Heart left ventricle (tissue), 16 donors: ENCODE measurements at regions of chr11 and their contacts with region 1.

Region 1: GRCh38 chr11:2885676-2886081 is at the start of gene CDKN1C:
- DNase-seq: peak; percentile 83 to 94 (median 91)
- ATAC-seq: peak; percentile 59 to 82 (median 76)
- H3K4me3 ChIP-seq: peak within 1 kb of the TSS; percentile 67 to 90 (median 85)
- H3K27ac ChIP-seq: peak within 1 kb of the TSS; percentile 71 to 94 (median 88)
- H3K4me1 ChIP-seq: peaks cover 0 to 43% (median 25%) of the 10 kb centered on the region in 12 donors
- H3K27me3 ChIP-seq: peaks cover 0 to 14% (median 0%) of the 10 kb centered on the region in 9 donors
- CTCF ChIP-seq: no peak
- POLR2A ChIP-seq: peak in 1 of 2 donors; percentile 95
- total RNA-seq, gene CDKN1C: 18.8 to 39.1 (median 33.4) TPM

Region 2: DNA sequence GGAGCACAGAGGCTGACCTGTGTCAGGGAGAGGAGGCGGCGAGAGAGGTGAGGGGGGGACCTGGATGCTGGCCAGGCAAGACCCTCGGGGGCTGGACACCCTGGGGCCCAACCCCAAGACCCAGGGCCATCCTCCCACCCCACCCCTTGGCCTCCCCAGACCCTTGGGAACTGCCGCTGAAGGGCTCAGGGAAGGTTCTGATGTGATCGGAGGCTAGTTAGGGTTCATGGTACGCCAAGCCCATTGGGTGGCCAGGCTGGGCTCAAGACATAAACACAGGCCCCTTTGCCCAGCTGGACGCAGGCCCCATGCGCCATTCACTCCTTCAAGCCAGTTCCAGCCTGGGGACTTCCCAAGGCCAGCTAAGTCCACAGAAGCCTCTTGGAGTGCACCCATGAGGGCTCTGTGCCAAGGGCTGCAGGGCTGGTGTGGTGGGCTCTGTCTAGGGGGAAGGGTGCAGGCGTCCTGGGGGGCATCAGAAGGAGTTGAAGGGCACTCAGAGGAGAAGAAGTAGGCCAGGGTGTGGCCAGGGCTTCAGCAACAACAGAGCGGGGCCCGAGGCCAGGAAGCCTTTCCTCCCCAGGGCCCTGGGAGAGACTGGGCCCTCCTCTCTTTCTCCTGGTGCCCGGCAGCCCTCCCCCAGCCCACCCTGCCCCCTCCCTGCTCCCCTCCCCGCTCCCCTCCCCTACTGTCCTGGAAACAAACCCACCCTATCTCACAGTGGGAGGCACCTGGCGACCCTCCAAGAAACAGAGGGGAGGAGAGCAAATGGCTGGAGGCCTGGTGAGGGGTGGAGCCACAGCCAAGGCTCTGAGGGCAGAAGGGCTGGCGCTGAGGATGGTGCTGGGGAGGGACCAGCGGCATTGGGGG is 570.9 kb before region 1 on chr11:
- intact Hi-C with region 1: loop called in 3 of 10 experiments (anchors 5 to 10 kb)
- DNase-seq: peak; percentile 92 to 97 (median 94)
- ATAC-seq: peak; percentile 86 to 91 (median 89)
- H3K4me3 ChIP-seq: peak overlapping the region in 9 of 12 donors; percentile 14 to 34 (median 26)
- H3K27ac ChIP-seq: peak overlapping the region; percentile 69 to 90 (median 86)
- H3K4me1 ChIP-seq: peaks cover 0 to 41% (median 26%) of the 10 kb centered on the region in 12 donors
- H3K27me3 ChIP-seq: no peaks in the 10 kb centered on the region
- CTCF ChIP-seq: no peak
- POLR2A ChIP-seq: no peak

Region 3: GRCh38 chr11:2444821-2445745 is 440.6 kb before region 1 on chr11 and contains the start of gene KCNQ1:
- intact Hi-C with region 1: loop called in 1 of 10 experiments (anchors 5 kb)
- DNase-seq: peak; percentile 55 to 84 (median 69)
- ATAC-seq: peak in 3 of 4 donors; percentile 60 to 85 (median 79)
- H3K4me3 ChIP-seq: peak within 1 kb of the TSS; percentile 11 to 68 (median 53)
- H3K27ac ChIP-seq: peak within 1 kb of the TSS in 9 of 12 donors; percentile 15 to 69 (median 49)
- H3K4me1 ChIP-seq: peaks cover 5 to 49% (median 33%) of the 10 kb centered on the region in 12 donors
- H3K27me3 ChIP-seq: peaks cover 0 to 9% (median 0%) of the 10 kb centered on the region in 9 donors
- CTCF ChIP-seq: peak in 1 of 12 donors; percentile 8
- POLR2A ChIP-seq: peak; percentile 43 to 59
- total RNA-seq, gene KCNQ1: 18.6 to 42.4 (median 38.4) TPM

Region 4: DNA sequence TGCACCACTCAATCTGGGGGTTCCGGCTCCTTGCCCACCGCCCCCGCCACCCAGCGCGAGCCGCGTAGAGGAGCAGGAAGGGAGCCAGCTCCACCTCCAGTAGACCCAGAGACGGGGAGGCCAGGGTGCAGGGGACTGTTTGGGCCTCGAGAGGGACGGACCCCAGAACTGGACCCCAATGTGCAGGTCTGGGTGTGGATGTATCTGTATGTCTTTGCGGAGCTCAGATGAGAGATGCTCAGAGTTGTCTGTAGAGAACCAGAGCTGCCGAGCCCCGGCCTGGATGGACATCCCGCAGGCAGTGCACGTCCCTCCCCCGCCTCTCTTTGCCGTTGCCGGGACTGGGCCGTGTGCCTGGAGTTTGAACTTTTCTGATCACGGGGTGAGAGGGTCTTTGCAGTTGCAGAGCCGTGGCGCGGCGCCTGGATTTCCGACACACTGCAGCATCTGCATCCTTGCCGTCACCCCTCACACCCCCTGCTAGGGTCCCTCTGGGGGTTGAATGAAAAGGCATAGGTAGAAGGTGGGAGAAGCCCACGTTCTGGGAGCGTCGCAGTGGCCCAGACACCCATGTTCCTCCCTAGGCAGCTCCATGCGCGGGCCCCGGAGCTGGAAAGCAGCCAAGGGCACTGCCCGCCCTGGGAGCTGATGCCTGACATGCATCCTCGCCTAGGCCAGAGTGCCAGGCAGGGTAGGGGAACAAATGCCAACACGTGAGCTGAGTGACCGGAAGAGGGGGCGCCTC is 335.6 kb before region 1 on chr11:
- intact Hi-C with region 1: loop called in 1 of 10 experiments (anchors 5 kb)
- DNase-seq: peak in 4 of 5 donors; percentile 52 to 77 (median 65)
- ATAC-seq: peak; percentile 38 to 84 (median 82)
- H3K4me3 ChIP-seq: no peak overlapping the region
- H3K27ac ChIP-seq: no peak overlapping the region
- H3K4me1 ChIP-seq: peaks cover 0 to 12% (median 0%) of the 10 kb centered on the region in 12 donors
- H3K27me3 ChIP-seq: no peaks in the 10 kb centered on the region
- CTCF ChIP-seq: no peak
- POLR2A ChIP-seq: no peak

Region 5: DNA sequence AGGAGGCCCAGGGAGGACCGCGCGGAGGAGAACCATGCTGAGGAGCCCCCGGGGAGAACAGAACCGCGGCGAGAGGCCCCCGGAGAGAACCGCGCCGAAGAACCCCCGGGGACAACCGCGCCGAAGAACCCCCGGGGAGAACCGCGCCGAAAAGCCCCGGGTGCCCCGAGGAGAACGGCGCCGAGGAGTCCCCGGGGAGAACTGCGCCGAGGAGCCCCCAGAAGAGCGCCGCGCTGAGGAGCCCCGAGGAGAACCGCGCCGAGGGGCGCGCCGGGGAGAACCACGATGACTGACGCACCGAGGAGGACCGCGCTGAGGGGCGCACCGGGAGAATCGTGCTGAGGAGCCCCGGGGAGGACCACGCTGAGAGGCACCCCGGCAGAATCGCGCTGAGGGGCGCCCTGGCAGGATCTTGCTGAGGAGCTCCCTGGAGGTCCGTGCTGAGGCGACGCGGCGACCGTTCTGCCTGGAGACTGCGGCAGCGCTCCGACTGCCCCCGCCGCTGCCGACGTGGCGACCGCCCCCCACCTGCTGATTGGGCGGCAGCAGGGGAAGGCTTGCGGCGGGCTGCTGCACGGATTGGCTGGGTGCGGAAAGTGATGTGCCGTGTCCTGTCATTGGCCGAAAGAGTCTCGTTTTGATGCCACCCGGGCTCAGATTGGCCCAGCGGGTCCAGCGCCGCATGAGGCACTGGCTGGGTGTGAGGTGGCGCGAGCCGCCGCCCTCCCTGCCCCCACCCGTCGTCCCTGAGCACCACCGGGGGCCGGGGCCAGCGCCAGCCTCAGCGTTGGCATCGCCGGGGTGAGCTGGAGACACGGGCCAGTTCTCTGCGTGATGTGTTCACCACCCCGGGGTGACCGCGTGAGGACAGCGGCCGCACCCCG is 185.9 kb before region 1 on chr11 and contains the start of gene KCNQ1OT1:
- intact Hi-C with region 1: loop called in 9 of 10 experiments (anchors 1 to 10 kb)
- DNase-seq: peak; percentile 91 to 93 (median 92)
- ATAC-seq: peak; percentile 94 to 97 (median 96)
- H3K4me3 ChIP-seq: peak within 1 kb of the TSS; percentile 53 to 94 (median 74)
- H3K27ac ChIP-seq: peak within 1 kb of the TSS; percentile 84 to 97 (median 92)
- H3K4me1 ChIP-seq: peaks cover 0 to 32% (median 14%) of the 10 kb centered on the region in 12 donors
- H3K27me3 ChIP-seq: no peaks in the 10 kb centered on the region
- CTCF ChIP-seq: no peak
- POLR2A ChIP-seq: peak; percentile 69 to 96
- total RNA-seq, gene KCNQ1OT1: 0.28 to 0.93 (median 0.40) TPM

Region 6: DNA sequence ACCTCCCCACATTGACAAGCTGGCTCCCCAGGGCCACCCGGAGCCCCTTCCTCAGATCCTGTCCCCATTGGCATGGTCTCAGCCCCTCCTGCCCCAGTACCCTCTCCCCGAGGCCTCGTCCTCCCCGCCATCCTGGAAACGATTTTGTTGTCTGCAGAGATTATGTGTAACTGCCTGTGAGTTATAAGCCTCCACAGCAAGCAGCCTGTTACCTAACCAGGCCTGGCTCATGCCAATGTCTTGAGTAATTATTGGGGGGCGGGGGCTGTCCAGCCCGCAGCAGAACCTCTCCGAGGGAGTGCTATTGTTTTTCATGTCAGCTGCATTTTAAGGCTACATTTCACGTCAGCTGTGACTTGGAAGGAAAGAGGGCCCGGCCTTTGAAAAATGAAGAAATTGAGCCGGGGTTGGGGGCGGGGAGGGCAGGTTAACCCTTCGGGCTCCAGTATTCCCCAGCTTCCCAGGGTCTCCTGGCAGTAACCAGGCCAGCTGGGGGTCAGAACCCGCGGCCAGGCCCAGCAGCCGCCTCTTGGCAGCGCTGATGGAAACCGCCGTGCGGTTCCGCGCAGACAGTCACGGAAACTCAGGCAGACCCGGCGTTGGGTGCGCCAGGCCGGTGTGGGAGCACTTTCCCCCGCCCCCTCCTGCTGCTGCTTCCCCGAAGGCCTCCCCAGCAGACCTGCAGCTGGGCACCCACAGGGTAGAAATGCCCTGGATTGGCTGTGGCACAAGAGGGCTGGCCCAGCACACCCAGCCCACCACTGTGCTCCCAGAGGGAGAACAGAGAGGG is 59.6 kb before region 1 on chr11:
- intact Hi-C with region 1: loop called in 4 of 10 experiments (anchors 2 to 5 kb)
- DNase-seq: peak; percentile 65 to 80 (median 72)
- ATAC-seq: peak; percentile 53 to 75 (median 74)
- H3K4me3 ChIP-seq: peak overlapping the region in 2 of 12 donors; percentile 1 to 17
- H3K27ac ChIP-seq: peak overlapping the region; percentile 78 to 96 (median 88)
- H3K4me1 ChIP-seq: peaks cover 7 to 49% (median 38%) of the 10 kb centered on the region in 12 donors
- H3K27me3 ChIP-seq: no peaks in the 10 kb centered on the region
- CTCF ChIP-seq: no peak
- POLR2A ChIP-seq: no peak

Region 7: DNA sequence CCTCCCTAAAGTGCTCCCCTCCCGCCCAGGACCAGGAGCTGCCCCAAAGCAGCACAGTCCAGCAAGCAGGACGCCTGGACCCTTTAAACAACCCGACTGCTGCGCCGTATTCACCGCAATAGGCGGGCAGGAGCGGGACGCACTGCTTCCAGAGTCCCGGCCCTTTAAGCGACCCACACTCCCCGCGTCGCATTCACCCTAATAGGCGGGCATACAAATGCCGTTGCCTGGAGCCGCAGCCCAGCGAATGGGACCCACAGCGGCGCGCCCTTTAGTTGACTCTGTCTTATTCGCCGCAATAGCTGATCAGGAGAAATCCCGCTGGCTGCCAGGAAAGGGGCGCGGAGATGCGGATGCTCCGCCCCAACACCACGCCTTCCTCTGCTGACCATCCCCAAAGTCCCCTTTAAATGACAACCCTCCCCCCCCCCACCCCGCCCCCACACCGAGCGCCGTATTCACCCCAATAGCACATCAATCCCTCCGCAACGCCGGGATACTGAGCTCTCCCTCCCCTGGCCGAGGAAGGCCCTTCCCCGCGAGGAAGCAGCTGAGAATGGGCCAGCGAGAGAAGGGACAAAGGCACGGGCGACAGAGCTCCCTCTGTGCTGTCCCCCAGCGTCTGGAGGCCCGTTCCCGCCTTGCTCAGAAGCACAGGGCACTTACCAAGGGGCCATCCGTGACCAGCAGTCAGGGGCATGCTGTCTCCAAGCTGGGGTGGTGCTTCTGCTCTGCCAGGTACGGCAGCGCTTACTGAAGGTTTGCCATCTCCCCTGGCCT is 274.8 kb after region 1 on chr11:
- intact Hi-C with region 1: no loop called
- DNase-seq: peak; percentile 88 to 94 (median 92)
- ATAC-seq: peak; percentile 74 to 88 (median 84)
- H3K4me3 ChIP-seq: peak overlapping the region; percentile 6 to 65 (median 58)
- H3K27ac ChIP-seq: peak overlapping the region; percentile 7 to 88 (median 72)
- H3K4me1 ChIP-seq: peaks cover 7 to 85% (median 66%) of the 10 kb centered on the region in 12 donors
- H3K27me3 ChIP-seq: no peaks in the 10 kb centered on the region
- CTCF ChIP-seq: no peak
- POLR2A ChIP-seq: no peak